A673 (cell line): ENCODE measurements at regions of chr1 and their contacts with region 1.

Region 1: DNA sequence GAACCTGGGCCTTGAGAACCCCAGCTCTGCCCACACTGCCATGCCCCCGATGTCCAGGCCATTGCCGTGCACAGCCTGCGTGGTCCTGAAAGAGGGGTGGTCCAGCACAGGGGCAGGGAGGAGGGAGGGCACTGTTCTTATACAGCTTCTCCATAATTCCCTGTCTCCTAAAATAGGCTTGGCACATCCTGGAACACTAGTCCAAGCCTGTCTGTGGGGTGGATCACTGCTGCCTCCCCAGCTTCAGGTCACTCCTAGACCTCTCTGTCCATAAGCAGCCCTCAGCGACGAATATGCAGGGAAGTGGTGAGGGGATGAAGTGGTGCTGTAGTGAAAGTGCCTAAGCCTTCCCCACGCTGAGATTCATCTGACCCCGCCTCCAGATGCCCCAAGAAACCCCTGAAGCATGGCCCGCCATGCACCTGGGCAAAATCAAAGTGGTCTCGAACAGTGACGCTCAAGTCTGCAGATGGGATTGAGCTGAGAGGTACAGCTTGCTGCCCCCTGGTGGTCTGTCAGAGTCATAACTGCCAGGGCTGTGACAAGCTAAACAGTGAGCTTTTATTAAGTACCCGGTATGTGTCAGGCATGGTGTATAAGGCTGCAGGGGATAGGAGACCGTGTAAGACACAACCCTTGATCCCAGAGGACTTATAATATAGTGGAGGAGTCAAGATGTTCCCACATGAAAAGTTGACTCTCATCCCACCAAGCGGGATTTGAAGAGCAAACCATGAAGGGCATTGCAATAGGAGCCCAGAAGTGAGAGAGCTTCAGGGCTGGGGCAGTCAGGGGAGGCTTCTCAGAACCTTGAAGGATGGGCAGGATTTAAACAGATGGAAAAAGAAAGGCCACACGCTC is 66.6 kb downstream of the FAM163A start:
- DNase-seq: peak; percentile 78
- H3K4me3 ChIP-seq: no peak overlapping the region
- H3K27ac ChIP-seq: no peak overlapping the region
- H3K4me1 ChIP-seq: no peaks in the 10 kb centered on the region
- H3K27me3 ChIP-seq: peaks cover 22% of the 10 kb centered on the region
- CTCF ChIP-seq: peak; percentile 94

Region 2: DNA sequence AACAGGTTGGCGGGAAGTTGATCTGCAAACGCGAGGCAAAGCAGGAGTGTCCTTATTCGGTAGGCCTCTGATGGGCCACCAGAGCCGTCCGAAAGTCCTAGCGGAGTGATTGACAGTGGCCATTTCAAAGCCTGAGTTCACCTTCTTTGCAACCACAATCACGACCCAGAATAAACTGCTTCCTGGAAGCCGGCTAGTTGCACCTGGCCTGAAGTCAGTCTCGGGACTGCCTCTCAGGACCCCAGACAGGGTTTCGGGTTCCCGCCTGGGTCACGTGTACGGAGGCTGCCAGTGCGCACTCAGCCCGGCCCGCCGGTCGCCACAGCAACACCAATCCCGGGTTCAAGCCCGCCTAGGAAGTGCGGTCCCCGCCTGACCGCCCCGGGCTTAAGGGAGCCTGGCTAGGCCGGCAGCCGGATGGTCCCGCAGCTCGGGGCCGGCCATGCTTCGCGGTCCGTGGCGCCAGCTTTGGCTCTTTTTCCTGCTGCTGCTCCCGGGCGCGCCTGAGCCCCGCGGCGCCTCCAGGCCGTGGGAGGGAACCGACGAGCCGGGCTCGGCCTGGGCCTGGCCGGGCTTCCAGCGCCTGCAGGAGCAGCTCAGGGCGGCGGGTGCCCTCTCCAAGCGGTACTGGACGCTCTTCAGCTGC is 727.9 kb before region 1 on chr1 and contains the start of gene TOR3A:
- CTCF ChIA-PET with region 1: no interaction called
- POLR2A ChIA-PET with region 1: no interaction called
- intact Hi-C with region 1: loop called (anchors 5 kb)
- DNase-seq: peak; percentile 82
- H3K4me3 ChIP-seq: peak within 1 kb of the TSS; percentile 84
- H3K27ac ChIP-seq: peak within 1 kb of the TSS; percentile 72
- H3K4me1 ChIP-seq: peaks cover 6% of the 10 kb centered on the region
- H3K27me3 ChIP-seq: no peaks in the 10 kb centered on the region
- CTCF ChIP-seq: no peak
- total RNA-seq, gene TOR3A: 18.0 and 21.0 TPM in 2 replicates

Region 3: DNA sequence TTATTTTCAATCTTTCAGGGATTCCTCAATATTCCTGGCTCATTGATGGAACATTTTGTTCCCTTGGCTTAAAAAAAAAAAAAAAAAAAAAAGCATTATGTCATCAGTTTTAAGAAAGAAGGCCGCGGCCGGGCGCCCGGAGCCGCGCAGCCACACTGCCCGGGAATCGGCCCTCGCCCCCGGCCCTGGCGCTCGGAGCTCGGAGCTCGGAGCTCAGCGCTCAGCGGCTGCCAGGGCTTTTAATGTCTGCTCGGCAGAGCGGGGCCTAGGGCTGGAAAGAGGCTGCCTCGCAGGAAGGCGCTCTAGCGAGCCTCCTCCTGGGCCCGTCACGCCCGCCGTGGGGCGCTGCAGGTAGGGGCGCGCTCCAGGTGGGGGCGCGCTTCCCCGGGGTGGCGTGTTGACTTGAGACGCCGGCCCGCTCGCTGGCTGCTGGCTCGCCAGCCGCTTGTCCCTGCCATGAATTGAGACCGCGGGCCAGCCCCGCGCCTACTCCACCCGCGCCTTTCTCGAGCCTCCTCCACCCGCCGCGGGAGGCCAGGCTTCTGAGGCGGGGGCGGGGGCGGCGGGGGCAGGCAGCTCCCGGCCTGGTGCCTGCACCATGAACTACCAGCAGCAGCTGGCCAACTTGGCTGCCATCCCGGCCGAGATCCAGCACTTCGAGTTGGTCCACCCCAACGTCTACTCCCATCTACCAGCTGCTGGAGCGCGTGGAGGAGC is 223.5 kb before region 1 on chr1:
- CTCF ChIA-PET with region 1: no interaction called
- POLR2A ChIA-PET with region 1: no interaction called
- intact Hi-C with region 1: loop called (anchors 10 kb)
- DNase-seq: peak; percentile 61
- H3K4me3 ChIP-seq: peak overlapping the region; percentile 28
- H3K27ac ChIP-seq: no peak overlapping the region
- H3K4me1 ChIP-seq: no peaks in the 10 kb centered on the region
- H3K27me3 ChIP-seq: peaks cover 46% of the 10 kb centered on the region
- CTCF ChIP-seq: peak; percentile 64

Region 4: GRCh38 chr1:179798864-179799516 is 10.7 kb before region 1 on chr1:
- CTCF ChIA-PET with region 1: interaction called, 17 read pairs
- POLR2A ChIA-PET with region 1: no interaction called
- intact Hi-C with region 1: no loop called
- DNase-seq: no peak
- H3K4me3 ChIP-seq: no peak overlapping the region
- H3K27ac ChIP-seq: no peak overlapping the region
- H3K4me1 ChIP-seq: no peaks in the 10 kb centered on the region
- H3K27me3 ChIP-seq: no peaks in the 10 kb centered on the region
- CTCF ChIP-seq: no peak

Region 5: GRCh38 chr1:180178511-180179161 is 368.9 kb after region 1 on chr1:
- CTCF ChIA-PET with region 1: interaction called, 12 read pairs
- POLR2A ChIA-PET with region 1: no interaction called
- intact Hi-C with region 1: loop called (anchors 2 kb)
- DNase-seq: peak; percentile 71
- H3K4me3 ChIP-seq: no peak overlapping the region
- H3K27ac ChIP-seq: no peak overlapping the region
- H3K4me1 ChIP-seq: no peaks in the 10 kb centered on the region
- H3K27me3 ChIP-seq: no peaks in the 10 kb centered on the region
- CTCF ChIP-seq: peak; percentile 96